PC-9 (cell line): ENCODE measurements at regions of chr15 and their contacts with region 1.

Region 1: GRCh38 chr15:45166834-45167630 is 20.7 kb downstream of the SHF start:
- DNase-seq: peak; percentile 57 to 79
- H3K4me3 ChIP-seq: peak overlapping the region; percentile 62; the same call in 1 of the 2 replicates
- H3K27ac ChIP-seq: peak overlapping the region; percentile 32; the same call in 1 of the 2 replicates
- H3K4me1 ChIP-seq: peaks cover 11% of the 10 kb centered on the region
- H3K27me3 ChIP-seq: no peaks in the 10 kb centered on the region
- CTCF ChIP-seq: peak; percentile 71

Region 2: DNA sequence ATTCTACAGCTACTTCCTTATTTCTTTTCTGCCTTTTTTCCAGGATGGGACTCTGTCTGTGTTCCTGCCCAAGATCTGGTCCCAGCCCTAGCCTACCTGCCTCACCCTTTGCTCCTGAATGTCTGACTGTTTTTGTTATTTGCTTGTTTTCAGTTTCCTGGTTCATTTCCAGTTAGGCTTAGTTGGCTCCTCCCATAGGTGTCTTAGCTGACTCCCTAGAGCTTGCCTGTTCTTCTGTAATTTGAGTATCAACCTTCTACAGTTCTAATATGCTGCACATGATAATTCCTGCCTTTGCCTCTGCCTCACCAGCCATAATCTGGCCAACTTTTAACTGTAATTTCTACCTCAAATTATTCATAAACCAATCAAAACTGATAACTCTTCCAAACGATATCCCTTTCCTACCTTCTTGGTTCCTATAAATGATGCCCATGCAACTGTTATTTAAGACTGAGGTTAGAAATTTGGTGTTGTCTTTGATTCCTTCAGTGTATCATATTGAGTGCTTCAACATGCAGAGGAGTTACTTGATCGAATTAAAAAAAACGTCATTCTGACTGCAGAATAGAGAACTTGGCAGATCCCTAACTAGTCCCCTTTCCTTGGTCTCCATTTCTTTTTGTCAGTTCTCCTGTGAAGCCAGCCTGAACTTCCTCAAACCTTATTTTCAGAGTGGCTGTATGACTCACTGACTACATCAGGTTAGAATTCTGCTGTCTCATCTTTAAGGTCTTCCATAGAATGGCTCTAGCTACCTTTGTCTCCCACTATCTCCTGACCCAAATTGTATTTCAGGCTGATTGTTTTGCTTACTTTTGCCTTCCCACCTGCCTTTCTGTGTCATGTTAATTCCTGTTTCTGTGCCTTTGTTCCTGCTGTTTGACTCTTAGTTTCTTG is 870.2 kb before region 1 on chr15:
- CTCF ChIA-PET with region 1: no interaction called
- POLR2A ChIA-PET with region 1: interaction called, 22 read pairs
- intact Hi-C with region 1: no loop called
- DNase-seq: peak; percentile 57 to 82
- H3K4me3 ChIP-seq: peak overlapping the region; percentile 31; the same call in 1 of the 2 replicates
- H3K27ac ChIP-seq: peak overlapping the region; percentile 93
- H3K4me1 ChIP-seq: peaks cover 46% of the 10 kb centered on the region
- H3K27me3 ChIP-seq: no peaks in the 10 kb centered on the region
- CTCF ChIP-seq: no peak

Region 3: DNA sequence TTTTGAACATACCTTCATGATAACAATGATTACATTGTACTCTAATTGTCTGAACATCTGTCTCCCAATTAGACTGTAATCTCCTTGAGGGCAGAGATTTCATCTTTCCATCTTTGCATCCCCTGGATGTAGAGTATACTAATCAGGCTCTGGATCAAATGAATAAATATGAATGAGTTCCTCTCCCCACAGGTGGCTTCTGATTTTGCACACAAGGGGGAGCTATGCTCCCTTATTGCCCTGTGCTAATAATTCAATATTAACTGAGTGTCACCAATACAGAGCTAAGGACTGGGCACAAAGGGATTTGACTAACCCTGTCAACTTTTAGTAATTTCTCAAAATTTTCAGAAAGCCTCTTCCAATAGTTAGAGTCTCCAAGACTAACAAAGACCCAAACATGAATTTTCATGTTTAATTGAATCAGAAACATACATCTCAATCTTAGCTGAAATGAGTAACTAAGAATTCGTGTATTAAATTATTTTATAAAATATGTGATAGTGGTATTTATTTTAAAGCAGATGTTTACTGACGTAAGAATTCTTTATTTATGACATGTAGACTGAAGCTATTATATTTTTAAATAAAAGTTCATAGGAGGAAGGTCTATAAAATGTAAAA is 40.4 kb before region 1 on chr15:
- CTCF ChIA-PET with region 1: interaction called, 16 read pairs
- POLR2A ChIA-PET with region 1: interaction called, 4 read pairs
- intact Hi-C with region 1: loop called (anchors 1 kb)
- DNase-seq: peak in 1 of 2 experiments; percentile 45
- H3K4me3 ChIP-seq: no peak overlapping the region
- H3K27ac ChIP-seq: no peak overlapping the region
- H3K4me1 ChIP-seq: peaks cover 11% of the 10 kb centered on the region; the same call in 1 of the 2 replicates
- H3K27me3 ChIP-seq: no peaks in the 10 kb centered on the region
- CTCF ChIP-seq: peak; percentile 78

Region 4: GRCh38 chr15:45198337-45199135 is 31.5 kb after region 1 on chr15:
- CTCF ChIA-PET with region 1: interaction called, 18 read pairs
- POLR2A ChIA-PET with region 1: no interaction called
- intact Hi-C with region 1: loop called (anchors 1 kb)
- DNase-seq: peak; percentile 88 to 94
- H3K4me3 ChIP-seq: peak overlapping the region; percentile 80
- H3K27ac ChIP-seq: no peak overlapping the region
- H3K4me1 ChIP-seq: no peaks in the 10 kb centered on the region
- H3K27me3 ChIP-seq: no peaks in the 10 kb centered on the region
- CTCF ChIP-seq: peak; percentile 77

Region 5: DNA sequence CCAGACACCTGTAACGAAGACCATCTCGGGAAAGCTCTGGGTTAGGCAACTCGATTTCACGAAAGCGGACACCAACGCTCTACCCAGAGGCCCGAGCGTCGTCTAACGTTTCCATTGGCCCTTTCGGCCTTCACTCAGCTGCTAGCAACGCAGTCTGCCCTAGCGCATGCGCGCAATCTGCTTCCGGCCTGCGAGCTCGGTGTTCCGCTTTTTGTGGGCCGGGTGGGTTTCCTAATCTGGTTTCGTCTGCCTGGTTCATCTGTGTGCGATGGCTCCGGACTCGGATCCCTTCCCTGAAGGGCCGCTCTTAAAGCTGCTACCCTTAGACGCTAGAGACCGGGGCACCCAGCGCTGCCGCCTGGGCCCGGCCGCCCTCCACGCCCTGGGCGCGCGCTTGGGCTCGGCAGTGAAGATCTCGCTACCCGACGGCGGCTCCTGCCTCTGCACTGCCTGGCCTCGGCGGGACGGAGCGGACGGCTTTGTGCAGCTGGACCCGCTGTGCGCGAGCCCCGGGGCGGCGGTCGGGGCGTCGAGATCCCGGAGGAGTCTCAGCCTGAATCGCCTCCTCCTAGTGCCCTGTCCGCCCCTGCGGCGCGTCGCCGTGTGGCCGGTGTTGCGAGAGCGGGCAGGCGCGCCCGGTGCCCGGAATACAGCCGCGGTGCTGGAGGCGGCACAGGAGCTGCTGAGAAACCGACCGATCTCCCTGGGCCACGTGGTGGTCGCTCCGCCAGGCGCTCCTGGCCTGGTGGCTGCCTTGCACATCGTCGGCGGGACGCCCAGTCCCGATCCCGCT is 235.3 kb after region 1 on chr15:
- CTCF ChIA-PET with region 1: no interaction called
- POLR2A ChIA-PET with region 1: interaction called, 3 read pairs
- intact Hi-C with region 1: loop called (anchors 1 kb)
- DNase-seq: peak; percentile 89 to 91
- H3K4me3 ChIP-seq: peak overlapping the region; percentile 78
- H3K27ac ChIP-seq: peak overlapping the region; percentile 57
- H3K4me1 ChIP-seq: peaks cover 12% of the 10 kb centered on the region
- H3K27me3 ChIP-seq: no peaks in the 10 kb centered on the region
- CTCF ChIP-seq: no peak

Region 6: DNA sequence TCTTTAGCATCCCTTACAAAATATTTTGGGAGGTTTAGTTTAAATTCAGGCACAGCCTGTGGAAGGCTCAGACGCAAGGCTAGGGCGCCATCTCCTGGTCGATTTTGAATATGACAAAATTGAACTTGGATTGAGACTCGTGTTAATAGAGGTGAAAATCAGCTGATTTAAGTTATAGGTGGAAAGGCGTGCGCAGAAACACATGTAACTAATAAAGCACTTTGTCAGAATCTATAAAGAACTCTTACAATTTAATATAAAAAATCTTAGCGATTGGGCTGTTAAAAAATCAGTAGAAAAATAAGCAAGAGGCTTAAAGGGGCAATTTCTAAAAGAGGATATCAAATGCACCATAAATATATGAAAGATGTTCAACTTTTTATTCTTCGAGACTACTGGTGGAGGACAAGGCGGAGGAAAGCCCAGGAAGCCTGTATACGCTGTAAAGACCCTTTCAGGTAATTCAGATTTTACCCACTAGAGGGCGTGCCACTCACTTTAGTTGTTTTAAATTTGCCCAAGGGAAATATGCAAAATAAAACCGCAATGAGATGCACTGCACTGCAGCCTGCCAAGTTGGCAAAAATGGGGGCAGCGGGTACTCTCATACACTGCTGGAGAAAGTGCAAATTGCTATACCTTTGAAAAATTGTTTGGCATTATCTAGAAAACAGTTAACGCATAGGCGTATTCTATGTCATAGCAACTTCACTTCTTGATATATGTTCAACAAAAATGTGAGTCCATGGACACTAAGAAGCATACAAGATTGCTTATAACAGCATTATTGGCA is 290.8 kb after region 1 on chr15:
- CTCF ChIA-PET with region 1: interaction called, 7 read pairs
- POLR2A ChIA-PET with region 1: no interaction called
- intact Hi-C with region 1: loop called (anchors 1 kb)
- DNase-seq: peak; percentile 66 to 67
- H3K4me3 ChIP-seq: peak overlapping the region; percentile 56
- H3K27ac ChIP-seq: peak overlapping the region; percentile 89
- H3K4me1 ChIP-seq: peaks cover 48% of the 10 kb centered on the region
- H3K27me3 ChIP-seq: no peaks in the 10 kb centered on the region
- CTCF ChIP-seq: peak; percentile 88